ENCODE measurements at regions of chr6 and their contacts with region 1.

Region 1: GRCh38 chr6:122471107-122472021 is at the start of gene SERINC1:
- DNase-seq: peak; percentile 90 to 93
- H3K4me3 ChIP-seq: peak within 1 kb of the TSS; percentile 92
- H3K4me3 Mint-ChIP-seq: peak within 1 kb of the TSS; percentile 93
- H3K27ac Mint-ChIP-seq: peak within 1 kb of the TSS; percentile 92
- H3K4me1 ChIP-seq: peaks cover 5% of the 10 kb centered on the region; the same call in 1 of the 2 replicates
- H3K4me1 Mint-ChIP-seq: no peaks in the 10 kb centered on the region
- H3K27me3 ChIP-seq: no peaks in the 10 kb centered on the region
- H3K27me3 Mint-ChIP-seq: no peaks in the 10 kb centered on the region
- CTCF ChIP-seq: no peak
- total RNA-seq, gene SERINC1: 70.2 and 72.2 TPM in 2 replicates

Region 2: GRCh38 chr6:122399384-122400158 is 71.8 kb before region 1 on chr6 and contains the start of gene HSF2:
- CTCF ChIA-PET with region 1: no interaction called
- POLR2A ChIA-PET with region 1: no interaction called
- intact Hi-C with region 1: loop called (anchors 5 kb)
- DNase-seq: peak; percentile 95 to 97
- H3K4me3 ChIP-seq: peak within 1 kb of the TSS; percentile 84
- H3K4me3 Mint-ChIP-seq: peak within 1 kb of the TSS; percentile 94
- H3K27ac Mint-ChIP-seq: peak within 1 kb of the TSS; percentile 96
- H3K4me1 ChIP-seq: 0 out of 2 replicates have a peak, but pooled peaks cover 10% of the 10 kb centered on the region
- H3K4me1 Mint-ChIP-seq: peaks cover 8% of the 10 kb centered on the region
- H3K27me3 ChIP-seq: no peaks in the 10 kb centered on the region
- H3K27me3 Mint-ChIP-seq: peaks cover 4% of the 10 kb centered on the region
- CTCF ChIP-seq: peak in 1 of 2 experiments; percentile 53
- total RNA-seq, gene HSF2: 12.1 and 12.3 TPM in 2 replicates

Region 3: GRCh38 chr6:122530440-122531046 is 59.2 kb after region 1 on chr6:
- CTCF ChIA-PET with region 1: interaction called, 4 read pairs
- POLR2A ChIA-PET with region 1: no interaction called
- intact Hi-C with region 1: loop called (anchors 1 kb)
- DNase-seq: peak; percentile 38 to 66
- H3K4me3 ChIP-seq: no peak overlapping the region
- H3K4me3 Mint-ChIP-seq: no peak overlapping the region
- H3K27ac Mint-ChIP-seq: no peak overlapping the region
- H3K4me1 ChIP-seq: no peaks in the 10 kb centered on the region
- H3K4me1 Mint-ChIP-seq: no peaks in the 10 kb centered on the region
- H3K27me3 ChIP-seq: no peaks in the 10 kb centered on the region
- H3K27me3 Mint-ChIP-seq: peaks cover 5% of the 10 kb centered on the region
- CTCF ChIP-seq: peak; percentile 81 to 90